ENCODE measurements at regions of chr4 and their contacts with region 1.

Region 1: GRCh38 chr4:76949276-76950051 is at the start of gene SEPTIN11:
- DNase-seq: peak; percentile 94 to 97 (median 95)
- ATAC-seq: peak; percentile 91 to 95 (median 94)
- H3K4me3 ChIP-seq: peak within 1 kb of the TSS; percentile 67 to 98 (median 80)
- H3K27ac ChIP-seq: peak within 1 kb of the TSS; percentile 76 to 97 (median 93)
- H3K4me1 ChIP-seq: peaks cover 0 to 44% (median 21%) of the 10 kb centered on the region in 12 donors
- H3K27me3 ChIP-seq: no peaks in the 10 kb centered on the region
- CTCF ChIP-seq: peak in 1 of 12 donors; percentile 15
- POLR2A ChIP-seq: peak in 1 of 2 donors; percentile 86
- total RNA-seq, gene SEPTIN11: 25.1 to 58.9 (median 36.2) TPM

Region 2: DNA sequence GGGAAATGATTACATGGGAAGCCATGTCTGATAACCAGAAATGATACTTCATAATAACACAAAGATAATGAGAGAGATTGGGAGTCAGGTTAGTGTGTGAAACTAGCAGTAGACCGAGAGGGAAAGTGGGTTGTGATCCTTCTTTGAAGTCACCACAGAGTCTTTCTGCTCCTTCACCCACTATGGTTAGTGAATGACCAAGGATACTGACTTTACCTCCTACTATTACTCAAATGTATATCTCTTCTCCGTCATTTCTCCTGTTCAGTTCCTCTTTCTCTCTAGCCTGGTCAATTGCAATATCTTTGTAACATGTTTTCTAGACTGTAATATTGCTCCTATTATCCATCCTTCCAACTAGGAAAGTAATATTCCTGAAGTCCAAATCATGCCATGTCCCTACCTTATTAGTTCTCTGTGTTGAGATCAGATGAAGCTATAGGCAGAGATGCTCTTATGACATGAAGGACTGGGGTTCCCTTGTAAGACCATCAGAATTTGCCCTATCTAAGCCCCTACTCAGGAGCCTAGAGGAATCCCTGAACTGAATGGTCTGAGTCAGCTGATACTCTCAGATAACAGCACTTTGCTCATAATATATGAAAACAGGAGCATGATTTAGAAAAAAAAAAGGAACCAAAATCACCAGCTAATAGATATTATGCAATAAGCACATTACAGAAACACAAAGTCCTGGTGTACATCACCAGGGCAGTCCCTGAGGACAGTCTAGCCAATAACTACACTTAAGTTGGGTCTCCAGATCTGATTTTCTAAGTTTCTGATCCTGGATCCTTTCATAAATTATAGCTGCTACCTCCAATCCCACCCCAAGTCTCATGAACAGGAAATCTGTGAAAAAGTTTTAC is 433.3 kb before region 1 on chr4:
- intact Hi-C with region 1: loop called in 1 of 10 experiments (anchors 5 kb)
- DNase-seq: no peak
- ATAC-seq: no peak
- H3K4me3 ChIP-seq: no peak overlapping the region
- H3K27ac ChIP-seq: no peak overlapping the region
- H3K4me1 ChIP-seq: peaks cover 0 to 8% (median 0%) of the 10 kb centered on the region in 12 donors
- H3K27me3 ChIP-seq: no peaks in the 10 kb centered on the region
- CTCF ChIP-seq: no peak
- POLR2A ChIP-seq: no peak

Region 3: DNA sequence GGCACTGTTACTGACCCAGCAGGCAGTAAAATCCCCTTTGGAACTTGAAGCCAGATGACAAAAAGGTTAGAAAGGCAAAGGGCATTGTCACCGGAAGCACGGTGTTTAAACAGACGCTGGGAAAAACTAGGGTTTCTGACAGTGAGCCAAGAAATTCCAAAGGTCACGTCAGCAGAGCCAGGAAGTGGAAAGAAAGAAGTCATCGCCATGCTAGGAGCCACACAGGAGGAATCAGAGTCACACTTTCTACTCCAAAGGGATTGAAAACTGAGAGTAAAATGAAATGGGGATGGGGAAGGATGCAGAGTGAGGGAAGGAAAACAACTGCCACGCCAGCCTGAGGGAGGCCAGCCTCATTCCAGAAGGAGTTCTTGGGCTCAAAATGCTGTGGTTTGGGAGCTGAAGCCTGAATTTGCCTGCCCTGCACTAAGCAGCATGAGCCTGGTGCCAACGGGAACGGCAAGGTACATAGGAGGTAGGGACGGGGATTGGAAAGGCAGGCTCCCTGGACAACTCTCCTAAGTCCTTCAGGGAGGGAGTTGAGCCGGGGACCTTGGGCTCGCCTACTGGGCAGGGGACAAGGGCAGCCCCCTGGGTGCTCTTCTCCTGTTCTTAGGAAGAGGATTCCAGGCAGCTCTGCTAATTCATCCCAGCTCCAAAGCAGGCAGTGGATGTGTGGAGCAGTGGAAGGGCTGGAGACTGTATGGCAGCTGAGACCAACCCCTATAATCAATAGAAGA is 118.3 kb before region 1 on chr4:
- intact Hi-C with region 1: loop called in 1 of 10 experiments (anchors 10 kb)
- DNase-seq: peak in 3 of 5 donors; percentile 45 to 71 (median 63)
- ATAC-seq: peak; percentile 72 to 93 (median 91)
- H3K4me3 ChIP-seq: no peak overlapping the region
- H3K27ac ChIP-seq: peak overlapping the region; percentile 3 to 89 (median 70)
- H3K4me1 ChIP-seq: peaks cover 4 to 24% (median 21%) of the 10 kb centered on the region in 12 donors
- H3K27me3 ChIP-seq: no peaks in the 10 kb centered on the region
- CTCF ChIP-seq: no peak
- POLR2A ChIP-seq: no peak

Region 4: GRCh38 chr4:76993787-76994641 is 44.5 kb after region 1 on chr4:
- intact Hi-C with region 1: loop called in 3 of 10 experiments (anchors 5 kb)
- DNase-seq: peak in 1 of 5 donors; percentile 40
- ATAC-seq: peak; percentile 40 to 88 (median 83)
- H3K4me3 ChIP-seq: no peak overlapping the region
- H3K27ac ChIP-seq: peak overlapping the region in 1 of 12 donors; percentile 56
- H3K4me1 ChIP-seq: peaks cover 0 to 38% (median 9%) of the 10 kb centered on the region in 12 donors
- H3K27me3 ChIP-seq: no peaks in the 10 kb centered on the region
- CTCF ChIP-seq: no peak
- POLR2A ChIP-seq: no peak

Region 5: DNA sequence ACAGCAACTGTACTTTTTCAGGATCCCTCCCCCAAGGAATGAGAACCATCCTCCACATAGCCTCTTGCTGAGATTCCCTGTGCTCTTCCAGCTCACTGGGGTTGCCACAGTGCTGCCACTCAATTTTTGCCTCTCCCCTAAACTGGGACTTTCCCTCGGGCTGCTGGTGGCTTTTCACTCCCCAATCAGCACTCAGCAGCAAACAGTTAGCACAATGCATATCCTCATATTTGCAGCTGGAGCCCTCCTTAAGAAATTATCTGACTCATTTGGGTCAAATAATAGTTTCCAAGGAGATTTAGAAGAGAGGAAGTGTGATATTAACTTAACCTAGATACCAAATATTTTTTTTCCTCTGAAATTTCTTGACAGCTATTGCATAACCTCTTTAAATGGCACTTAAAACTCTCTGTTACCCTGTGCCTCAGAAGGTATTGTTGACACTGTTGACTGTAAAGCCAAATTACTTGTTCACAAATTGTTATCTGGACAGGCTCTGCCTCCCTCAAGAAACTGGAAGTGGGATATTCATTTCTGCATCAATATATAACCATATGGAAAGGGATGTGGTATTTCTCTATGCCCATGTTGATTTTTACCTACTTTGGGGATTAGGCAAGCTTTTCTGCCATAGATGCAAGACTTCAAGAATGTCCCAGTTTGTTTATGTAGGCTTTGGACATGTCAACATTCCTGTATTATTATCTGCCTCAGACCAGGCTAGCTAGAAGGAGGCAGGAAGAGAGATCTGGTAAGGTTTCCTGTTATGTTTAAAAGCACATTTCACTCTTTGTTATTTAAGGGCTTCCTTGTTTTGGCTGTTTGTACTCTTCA is 58.1 kb after region 1 on chr4:
- intact Hi-C with region 1: loop called in 2 of 10 experiments (anchors 5 to 10 kb)
- DNase-seq: peak in 2 of 5 donors; percentile 37 to 45
- ATAC-seq: peak in 3 of 4 donors; percentile 72 to 89 (median 77)
- H3K4me3 ChIP-seq: no peak overlapping the region
- H3K27ac ChIP-seq: peak overlapping the region in 8 of 12 donors; percentile 4 to 28 (median 10)
- H3K4me1 ChIP-seq: peaks cover 4 to 78% (median 39%) of the 10 kb centered on the region in 12 donors
- H3K27me3 ChIP-seq: no peaks in the 10 kb centered on the region
- CTCF ChIP-seq: no peak
- POLR2A ChIP-seq: no peak

Region 6: DNA sequence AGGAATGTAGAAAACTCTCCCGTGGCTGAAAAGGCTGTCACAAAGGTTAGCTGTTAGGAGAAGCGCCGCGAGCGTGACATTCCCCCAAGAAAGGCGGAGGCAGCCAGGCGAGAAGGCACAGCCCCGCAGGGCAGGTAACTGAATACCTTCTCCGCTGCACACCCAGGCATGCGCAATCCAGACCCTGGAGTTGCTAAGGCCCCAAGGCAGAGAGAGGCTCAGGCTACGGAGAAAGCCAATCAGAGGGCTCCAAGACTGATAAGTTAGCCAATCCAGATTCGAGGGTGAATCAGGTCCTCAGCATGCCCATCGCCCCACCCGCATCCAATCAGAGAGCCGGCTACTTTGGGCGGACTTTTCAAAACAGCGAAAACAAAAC is 207.1 kb after region 1 on chr4:
- intact Hi-C with region 1: loop called in 1 of 10 experiments (anchors 5 kb)
- DNase-seq: peak; percentile 90 to 96 (median 95)
- ATAC-seq: peak; percentile 98 to 99 (median 98)
- H3K4me3 ChIP-seq: peak overlapping the region; percentile 65 to 97 (median 86)
- H3K27ac ChIP-seq: peak overlapping the region; percentile 80 to 95 (median 91)
- H3K4me1 ChIP-seq: peaks cover 0 to 34% (median 5%) of the 10 kb centered on the region in 12 donors
- H3K27me3 ChIP-seq: no peaks in the 10 kb centered on the region
- CTCF ChIP-seq: no peak
- POLR2A ChIP-seq: no peak